A549 (cell line): ENCODE measurements at regions of chr16 and their contacts with region 1.

Region 1: GRCh38 chr16:71610936-71611871 is 14.8 kb upstream of the MARVELD3 start:
- DNase-seq: peak; percentile 76 to 84
- ATAC-seq: peak; percentile 97
- H3K4me3 ChIP-seq: peak overlapping the region; percentile 3; the same call in 1 of the 3 replicates
- H3K27ac ChIP-seq: no peak overlapping the region; a peak in 1 of 6 replicates
- H3K4me1 ChIP-seq: peaks cover 9% of the 10 kb centered on the region; the same call in 2 of the 3 replicates
- CTCF ChIP-seq: peak; percentile 94
- EP300 ChIP-seq: no peak
- POLR2A ChIP-seq: no peak
- RAD21 ChIP-seq: peak; percentile 91 to 95

Region 2: DNA sequence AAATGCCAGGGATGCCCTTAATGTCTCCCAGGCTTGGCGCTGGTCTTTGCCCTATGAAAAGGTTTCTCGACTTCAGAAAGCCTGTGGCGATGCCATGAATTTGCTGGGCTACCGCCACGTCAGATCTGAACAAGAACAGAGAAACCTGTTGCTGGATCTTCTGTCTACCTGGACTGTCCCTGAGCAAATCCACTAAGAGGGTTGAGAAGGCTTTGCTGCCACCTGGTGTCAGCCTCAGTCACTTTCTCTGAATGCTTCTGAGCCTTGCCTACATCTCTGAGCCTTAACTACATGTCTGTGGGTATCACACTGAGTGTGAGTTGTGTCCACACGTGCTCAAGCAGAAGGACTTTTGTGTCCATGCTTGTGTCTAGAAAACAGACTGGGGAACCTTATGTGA is 73.6 kb before region 1 on chr16:
- CTCF ChIA-PET with region 1: interaction called, 29 read pairs
- POLR2A ChIA-PET with region 1: no interaction called
- DNase-seq: peak; percentile 63 to 64
- ATAC-seq: peak; percentile 92 to 93
- H3K4me3 ChIP-seq: no peak overlapping the region
- H3K27ac ChIP-seq: no peak overlapping the region
- H3K4me1 ChIP-seq: no peaks in the 10 kb centered on the region
- CTCF ChIP-seq: peak; percentile 63
- EP300 ChIP-seq: no peak
- POLR2A ChIP-seq: no peak
- RAD21 ChIP-seq: peak; percentile 61 to 71

Region 3: DNA sequence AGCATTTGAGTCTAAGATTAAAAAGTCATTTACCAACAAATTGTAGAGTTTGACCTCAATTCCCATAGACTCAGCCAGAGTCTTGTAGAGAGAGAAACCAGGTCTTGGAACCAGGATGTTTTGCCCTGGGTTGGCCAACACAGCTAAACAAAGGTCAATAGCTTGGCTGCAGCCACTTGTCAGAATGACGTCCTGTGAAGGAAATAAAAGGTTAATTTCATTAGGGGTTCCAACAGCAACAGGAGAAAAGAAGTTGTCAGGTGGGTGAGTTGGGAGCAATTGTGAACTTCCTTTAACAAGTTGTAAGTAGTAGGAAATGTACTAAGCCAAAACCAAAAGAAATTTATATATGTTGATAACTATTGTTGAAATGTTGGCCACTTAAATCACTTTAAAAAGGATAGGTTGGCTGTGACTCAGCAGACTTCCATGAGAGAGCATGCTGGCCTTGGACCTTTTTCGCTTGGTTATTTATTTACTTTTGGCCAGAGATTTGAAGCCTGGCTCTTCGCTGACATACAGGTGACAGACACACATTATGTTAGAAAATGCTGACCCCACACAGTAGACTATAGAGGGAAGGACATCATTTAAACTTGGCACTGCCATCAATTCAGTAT is 38.6 kb before region 1 on chr16:
- CTCF ChIA-PET with region 1: interaction called, 23 read pairs
- POLR2A ChIA-PET with region 1: no interaction called
- DNase-seq: peak in 1 of 2 experiments; percentile 60
- ATAC-seq: peak; percentile 38 to 66; a peak in 3 of 6 replicates
- H3K4me3 ChIP-seq: no peak overlapping the region
- H3K27ac ChIP-seq: peak overlapping the region; percentile 74 to 79
- H3K4me1 ChIP-seq: peaks cover 23% of the 10 kb centered on the region
- CTCF ChIP-seq: no peak
- EP300 ChIP-seq: no peak
- POLR2A ChIP-seq: no peak
- RAD21 ChIP-seq: no peak

Region 4: DNA sequence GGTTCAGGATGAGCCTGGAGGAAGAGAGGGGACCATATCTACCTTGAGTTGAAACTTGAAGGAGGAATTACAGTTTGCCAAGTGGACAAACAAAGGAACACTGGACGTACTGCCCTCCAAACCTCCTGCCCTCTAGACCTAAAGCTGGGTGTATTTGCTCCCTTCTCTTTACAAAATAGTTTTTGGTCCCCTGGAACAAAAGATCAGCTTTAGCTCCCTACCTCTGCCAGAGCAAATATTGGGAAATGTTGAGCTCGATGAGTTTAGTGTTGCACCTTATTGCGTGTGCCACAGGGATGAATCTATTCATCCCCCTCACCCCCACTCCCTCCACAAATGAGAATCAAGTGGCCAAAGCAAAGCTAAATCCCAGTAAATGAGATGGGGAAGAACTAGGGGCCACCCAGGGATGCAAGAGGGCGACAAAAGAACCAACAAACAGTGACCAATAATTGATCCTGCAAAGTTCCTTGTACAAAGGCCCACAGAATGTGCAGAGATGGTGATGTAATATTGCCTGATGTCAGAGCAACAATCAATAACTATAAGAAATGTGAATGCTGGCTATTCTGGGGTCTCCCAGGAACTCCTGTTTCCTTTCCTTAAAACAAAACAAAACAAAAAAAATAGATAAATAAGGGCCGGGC is 17.1 kb before region 1 on chr16:
- CTCF ChIA-PET with region 1: interaction called, 30 read pairs
- POLR2A ChIA-PET with region 1: interaction called, 7 read pairs
- DNase-seq: no peak
- ATAC-seq: no peak
- H3K4me3 ChIP-seq: no peak overlapping the region
- H3K27ac ChIP-seq: peak overlapping the region in 1 of 2 experiments; percentile 43; a peak in 1 of 6 replicates
- H3K4me1 ChIP-seq: no peaks in the 10 kb centered on the region
- CTCF ChIP-seq: no peak
- EP300 ChIP-seq: no peak
- POLR2A ChIP-seq: no peak
- RAD21 ChIP-seq: no peak

Region 5: DNA sequence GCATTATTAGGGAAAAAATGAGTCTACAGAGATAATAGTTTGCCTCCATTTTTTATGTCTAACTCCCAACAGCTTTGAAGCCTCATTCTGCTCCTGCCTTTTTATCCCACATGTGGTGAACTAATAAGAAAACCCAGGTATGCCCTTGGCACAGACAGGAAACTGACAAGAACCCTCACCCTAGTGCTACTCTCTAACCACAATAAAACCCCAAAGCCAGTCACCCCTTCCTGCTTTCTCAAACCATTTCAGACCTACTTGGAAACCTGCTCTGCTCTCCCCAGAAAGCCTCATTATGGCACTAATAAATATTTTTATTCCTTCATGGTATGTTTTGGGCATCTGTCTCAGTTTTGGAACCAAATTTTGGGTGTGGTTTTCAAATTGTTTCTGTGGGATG is 10.9 kb after region 1 on chr16:
- CTCF ChIA-PET with region 1: interaction called, 23 read pairs
- POLR2A ChIA-PET with region 1: no interaction called
- DNase-seq: no peak
- ATAC-seq: no peak
- H3K4me3 ChIP-seq: no peak overlapping the region
- H3K27ac ChIP-seq: no peak overlapping the region
- H3K4me1 ChIP-seq: peaks cover 3% of the 10 kb centered on the region; the same call in 1 of the 3 replicates
- CTCF ChIP-seq: no peak
- EP300 ChIP-seq: no peak
- POLR2A ChIP-seq: no peak
- RAD21 ChIP-seq: no peak

Region 6: DNA sequence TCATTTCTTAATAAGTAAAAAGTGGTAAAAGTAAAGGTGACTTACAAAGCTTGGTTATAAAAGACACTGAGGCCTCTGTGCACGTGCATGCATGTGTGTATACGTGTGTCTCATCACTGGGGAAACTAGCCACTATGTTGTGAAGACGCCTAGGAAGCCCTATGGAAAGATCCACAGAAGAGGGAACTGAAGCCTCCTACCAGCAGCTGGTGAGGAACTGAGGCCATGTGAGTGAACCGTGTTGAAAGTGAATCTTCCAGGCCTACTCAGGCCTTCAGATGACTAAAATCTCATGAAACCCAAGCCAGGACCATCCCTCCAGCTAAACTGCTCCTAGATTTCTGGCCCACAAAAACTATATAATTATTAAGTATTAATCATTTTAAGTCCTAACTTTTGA is 89.6 kb after region 1 on chr16:
- CTCF ChIA-PET with region 1: no interaction called
- POLR2A ChIA-PET with region 1: no interaction called
- DNase-seq: no peak
- ATAC-seq: no peak
- H3K4me3 ChIP-seq: no peak overlapping the region
- H3K27ac ChIP-seq: no peak overlapping the region
- H3K4me1 ChIP-seq: no peaks in the 10 kb centered on the region
- CTCF ChIP-seq: no peak
- EP300 ChIP-seq: no peak
- POLR2A ChIP-seq: no peak
- RAD21 ChIP-seq: no peak

Region 7: GRCh38 chr16:72066747-72067146 is 455.5 kb after region 1 on chr16:
- CTCF ChIA-PET with region 1: no interaction called
- POLR2A ChIA-PET with region 1: no interaction called
- DNase-seq: peak; percentile 48 to 53
- ATAC-seq: peak; percentile 86; a peak in 5 of 6 replicates
- H3K4me3 ChIP-seq: no peak overlapping the region
- H3K27ac ChIP-seq: no peak overlapping the region
- H3K4me1 ChIP-seq: no peaks in the 10 kb centered on the region
- CTCF ChIP-seq: peak; percentile 63
- EP300 ChIP-seq: no peak
- POLR2A ChIP-seq: no peak
- RAD21 ChIP-seq: peak; percentile 59 to 69